ENCODE measurements at regions of chr19 and their contacts with region 1.

Region 1: DNA sequence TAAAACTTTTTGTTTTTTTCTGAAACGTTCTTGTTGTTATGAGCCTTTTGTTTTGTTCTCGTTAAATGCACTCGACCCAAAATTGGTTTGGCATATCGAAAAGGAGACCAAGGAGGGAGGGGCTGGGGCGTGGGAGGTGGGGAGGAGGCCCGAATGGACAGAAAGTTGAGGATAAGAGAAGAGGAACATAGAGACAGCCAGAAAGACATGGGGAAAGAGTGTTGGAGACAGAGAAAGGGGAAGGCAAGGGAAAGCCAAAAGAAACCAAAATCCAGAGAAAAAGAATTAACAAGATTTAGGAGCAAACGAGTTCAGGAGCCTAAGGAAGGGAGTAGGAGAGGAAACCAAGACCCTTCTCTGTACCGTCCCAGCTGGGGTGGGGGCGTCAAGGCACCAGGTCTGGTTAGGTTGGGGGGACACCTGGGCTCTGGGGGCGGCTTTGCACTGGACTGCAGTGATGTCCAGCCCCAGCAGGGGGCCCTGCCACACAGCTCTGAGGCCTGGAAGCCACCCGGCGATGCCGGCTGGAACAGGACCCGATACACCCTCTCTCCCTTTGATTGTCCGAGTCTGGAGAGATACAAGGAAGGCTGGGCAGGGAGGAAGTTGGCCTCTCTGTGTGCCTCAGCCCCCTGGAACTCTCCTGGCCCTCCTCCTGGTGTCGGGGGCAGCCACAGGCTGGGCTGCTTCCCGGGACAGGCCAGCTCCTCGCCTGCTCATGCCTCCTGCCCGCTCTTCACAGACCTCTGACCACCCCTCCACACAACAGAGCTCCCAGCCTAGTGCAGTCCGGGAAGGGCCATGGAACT is 11.6 kb upstream of the ASF1B start:
- DNase-seq: peak; percentile 93

Region 2: GRCh38 chr19:13880059-13881043 is 267.6 kb before region 1 on chr19:
- intact Hi-C with region 1: loop called in 1 of 2 experiments (anchors 10 kb)
- DNase-seq: peak; percentile 100

Region 3: GRCh38 chr19:14127929-14128509 is 20.0 kb before region 1 on chr19:
- intact Hi-C with region 1: loop called in 1 of 2 experiments (anchors 1 kb)
- DNase-seq: no peak

Region 4: GRCh38 chr19:14347999-14348889 is 200.2 kb after region 1 on chr19:
- intact Hi-C with region 1: loop called (anchors 5 to 10 kb)
- DNase-seq: peak; percentile 90

Region 5: GRCh38 chr19:14479975-14480699 is 332.1 kb after region 1 on chr19:
- intact Hi-C with region 1: loop called in 1 of 2 experiments (anchors 10 kb)
- DNase-seq: no peak